MCF 10A (cell line): ENCODE measurements at regions of chr7 and their contacts with region 1.

Region 1: DNA sequence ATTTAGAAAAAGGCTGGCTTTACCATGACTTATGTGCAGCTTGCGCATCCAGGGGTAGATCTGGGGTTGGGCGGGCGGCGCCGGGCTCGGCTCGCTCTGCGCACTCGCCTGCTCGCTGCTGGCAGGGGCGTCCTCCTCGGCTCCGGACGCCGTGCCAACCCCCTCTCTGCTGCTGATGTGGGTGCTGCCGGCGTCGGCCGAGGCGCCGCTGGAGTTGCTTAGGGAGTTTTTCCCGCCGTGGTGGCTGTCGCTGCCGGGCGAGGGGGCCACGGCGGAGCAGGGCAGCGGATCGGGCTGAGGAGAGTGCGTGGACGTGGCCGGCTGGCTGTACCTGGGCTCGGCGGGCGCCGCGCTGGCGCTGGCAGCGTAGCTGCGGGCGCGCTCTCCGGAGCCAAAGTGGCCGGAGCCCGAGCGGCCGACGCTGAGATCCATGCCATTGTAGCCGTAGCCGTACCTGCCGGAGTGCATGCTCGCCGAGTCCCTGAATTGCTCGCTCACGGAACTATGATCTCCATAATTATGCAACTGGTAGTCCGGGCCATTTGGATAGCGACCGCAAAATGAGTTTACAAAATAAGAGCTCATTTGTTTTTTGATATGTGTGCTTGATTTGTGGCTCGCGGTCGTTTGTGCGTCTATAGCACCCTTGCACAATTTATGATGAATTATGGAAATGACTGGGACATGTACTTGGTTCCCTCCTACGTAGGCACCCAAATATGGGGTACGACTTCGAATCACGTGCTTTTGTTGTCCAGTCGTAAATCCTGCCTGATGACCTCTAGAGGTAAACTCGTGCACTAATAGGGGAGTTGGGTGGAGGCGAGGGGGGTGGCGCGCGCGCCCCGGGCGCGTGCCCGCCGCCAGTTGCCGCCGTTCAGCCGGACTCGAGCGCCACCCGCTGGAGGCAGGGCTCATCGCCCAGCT is at the start of gene HOXA5:
- DNase-seq: peak; percentile 99
- H3K4me3 Mint-ChIP-seq: peak within 1 kb of the TSS; percentile 100
- H3K27ac Mint-ChIP-seq: peak within 1 kb of the TSS; percentile 99
- H3K4me1 Mint-ChIP-seq: peaks cover 31% of the 10 kb centered on the region
- H3K27me3 Mint-ChIP-seq: no peaks in the 10 kb centered on the region
- CTCF ChIP-seq: peak; percentile 93
- total RNA-seq, gene HOXA5: 7.4 and 8.8 TPM in 2 replicates

Region 2: GRCh38 chr7:26200444-26201246 is 942.6 kb before region 1 on chr7 and contains the start of gene HNRNPA2B1:
- CTCF ChIA-PET with region 1: no interaction called
- POLR2A ChIA-PET with region 1: interaction called, 9 read pairs
- intact Hi-C with region 1: loop called (anchors 5 kb)
- DNase-seq: peak; percentile 98
- H3K4me3 Mint-ChIP-seq: peak within 1 kb of the TSS; percentile 98
- H3K27ac Mint-ChIP-seq: peak within 1 kb of the TSS; percentile 99
- H3K4me1 Mint-ChIP-seq: peaks cover 37% of the 10 kb centered on the region
- H3K27me3 Mint-ChIP-seq: no peaks in the 10 kb centered on the region
- CTCF ChIP-seq: no peak
- total RNA-seq, gene HNRNPA2B1: 592 and 646 TPM in 2 replicates

Region 3: DNA sequence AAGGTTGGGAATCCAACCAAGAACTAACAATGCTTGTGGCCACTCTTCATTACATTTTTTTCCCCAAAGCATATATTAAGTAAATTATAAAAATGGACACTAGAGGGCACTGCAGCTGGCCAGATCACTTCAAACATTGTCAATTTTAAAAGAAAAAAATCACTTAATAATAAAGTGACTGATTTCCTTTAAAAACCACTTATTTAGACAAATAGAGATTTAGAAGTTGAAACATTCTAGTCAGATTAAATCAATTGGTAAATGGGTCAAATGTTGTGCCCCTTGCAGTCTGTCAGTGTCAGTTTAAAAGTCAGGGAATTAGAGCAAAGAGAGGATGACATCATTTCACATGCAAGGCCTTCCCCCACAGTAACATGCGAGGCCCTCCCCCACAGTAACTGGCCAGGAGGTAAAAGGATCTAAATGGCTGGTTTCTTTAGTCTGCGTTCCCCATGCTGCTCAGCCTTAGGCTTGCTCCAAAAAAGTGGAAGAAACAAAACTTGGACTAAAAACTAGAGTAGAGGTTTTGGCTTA is 456.8 kb before region 1 on chr7:
- CTCF ChIA-PET with region 1: interaction called, 12 read pairs
- POLR2A ChIA-PET with region 1: interaction called, 58 read pairs
- intact Hi-C with region 1: loop called (anchors 1 kb)
- DNase-seq: peak; percentile 51
- H3K4me3 Mint-ChIP-seq: no peak overlapping the region
- H3K27ac Mint-ChIP-seq: no peak overlapping the region
- H3K4me1 Mint-ChIP-seq: peaks cover 3% of the 10 kb centered on the region
- H3K27me3 Mint-ChIP-seq: no peaks in the 10 kb centered on the region
- CTCF ChIP-seq: peak; percentile 59

Region 4: DNA sequence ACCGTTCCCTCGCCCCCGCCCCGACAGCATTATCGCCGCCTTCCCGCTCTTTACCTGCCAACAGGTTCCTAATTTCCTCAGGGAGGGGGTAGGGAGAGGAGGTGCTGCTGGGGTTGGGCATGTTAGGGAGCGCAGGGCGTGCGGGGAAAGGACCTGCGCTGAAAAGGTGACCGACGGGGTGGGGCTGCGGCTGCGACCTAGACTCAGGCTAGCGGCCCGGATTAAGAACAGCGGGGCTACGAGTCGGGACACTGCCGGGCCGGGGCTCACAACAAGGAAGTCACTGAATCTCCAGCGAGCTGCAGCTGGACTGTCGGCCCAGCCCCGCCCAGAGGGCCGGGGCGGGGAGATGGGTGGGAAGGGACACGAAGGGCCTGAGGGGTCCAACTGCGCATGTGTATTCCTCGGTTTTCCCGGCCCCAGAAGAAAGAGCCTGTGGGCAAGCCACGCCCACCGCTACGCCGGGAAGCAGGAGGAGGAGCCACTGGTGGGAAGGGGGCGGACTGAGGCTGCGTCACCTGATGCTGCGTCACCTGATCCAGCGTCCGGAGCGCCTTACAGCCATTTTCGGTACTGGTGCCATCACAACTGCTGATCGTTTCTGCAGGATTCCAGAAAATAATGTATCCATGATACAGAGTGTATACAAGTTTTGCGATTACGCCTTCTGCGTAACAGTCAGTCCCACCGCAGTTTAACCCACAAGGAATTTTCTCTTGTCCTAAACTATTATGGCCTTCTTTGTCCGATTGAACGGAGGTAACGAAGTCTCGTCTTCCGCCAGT is 278.8 kb before region 1 on chr7 and contains the start of gene SKAP2:
- CTCF ChIA-PET with region 1: interaction called, 190 read pairs
- POLR2A ChIA-PET with region 1: interaction called, 459 read pairs
- intact Hi-C with region 1: no loop called
- DNase-seq: peak; percentile 99
- H3K4me3 Mint-ChIP-seq: peak within 1 kb of the TSS; percentile 97
- H3K27ac Mint-ChIP-seq: peak within 1 kb of the TSS; percentile 96
- H3K4me1 Mint-ChIP-seq: peaks cover 31% of the 10 kb centered on the region
- H3K27me3 Mint-ChIP-seq: no peaks in the 10 kb centered on the region
- CTCF ChIP-seq: no peak
- total RNA-seq, gene SKAP2: 24.8 and 27.5 TPM in 2 replicates

Region 5: GRCh38 chr7:27124096-27124901 is 19.0 kb before region 1 on chr7:
- CTCF ChIA-PET with region 1: interaction called, 12 read pairs
- POLR2A ChIA-PET with region 1: interaction called, 56 read pairs
- intact Hi-C with region 1: no loop called
- DNase-seq: no peak
- H3K4me3 Mint-ChIP-seq: peak overlapping the region; percentile 29
- H3K27ac Mint-ChIP-seq: no peak overlapping the region
- H3K4me1 Mint-ChIP-seq: peaks cover 20% of the 10 kb centered on the region
- H3K27me3 Mint-ChIP-seq: no peaks in the 10 kb centered on the region
- CTCF ChIP-seq: no peak

Region 6: DNA sequence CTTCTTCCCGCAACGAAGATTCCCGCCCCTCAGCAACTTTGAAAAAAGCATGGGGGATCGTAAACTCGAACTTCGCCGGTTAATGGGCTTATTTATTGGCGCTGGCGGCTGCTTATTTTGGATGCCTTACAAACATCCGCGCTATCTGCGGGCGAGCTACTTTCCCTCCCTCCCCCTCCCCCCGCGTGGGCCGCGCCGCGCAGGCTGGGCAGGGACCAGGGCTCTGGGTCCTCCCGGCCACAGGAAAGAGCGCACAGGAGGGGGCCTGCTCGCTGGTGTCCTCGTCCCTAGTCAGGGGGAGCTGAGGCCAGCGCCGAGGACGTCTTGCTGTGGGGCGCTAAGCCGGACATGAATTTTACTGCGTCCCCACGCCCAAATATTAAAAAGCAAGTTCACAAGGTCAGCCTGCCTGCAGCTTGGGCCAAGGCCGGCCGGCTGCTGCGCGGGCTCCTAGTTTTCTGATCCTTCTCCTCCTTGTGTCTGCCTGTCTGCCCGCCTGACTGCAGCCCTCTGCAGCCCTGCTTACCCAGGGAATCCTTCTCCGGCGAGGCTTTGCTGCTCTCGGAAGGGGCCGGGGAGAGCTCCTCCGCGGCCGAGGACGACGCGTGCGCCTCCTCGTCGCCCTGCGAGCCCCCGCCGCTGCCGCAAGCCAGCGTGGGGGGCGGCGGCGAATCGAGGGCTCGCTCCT is 29.7 kb after region 1 on chr7:
- CTCF ChIA-PET with region 1: interaction called, 10 read pairs
- POLR2A ChIA-PET with region 1: interaction called, 41 read pairs
- intact Hi-C with region 1: no loop called
- DNase-seq: peak; percentile 55
- H3K4me3 Mint-ChIP-seq: peak overlapping the region; percentile 79
- H3K27ac Mint-ChIP-seq: peak overlapping the region; percentile 87
- H3K4me1 Mint-ChIP-seq: peaks cover 20% of the 10 kb centered on the region
- H3K27me3 Mint-ChIP-seq: no peaks in the 10 kb centered on the region
- CTCF ChIP-seq: no peak